Calu3 (cell line): ENCODE measurements at regions of chrX and their contacts with region 1.

Region 1: GRCh38 chrX:125203737-125204578 is 115.7 kb upstream of the TEX13C start:
- DNase-seq: no peak
- H3K4me3 Mint-ChIP-seq: peak overlapping the region; percentile 40
- H3K27ac Mint-ChIP-seq: no peak overlapping the region
- H3K4me1 Mint-ChIP-seq: no peaks in the 10 kb centered on the region
- H3K27me3 Mint-ChIP-seq: peaks cover 23% of the 10 kb centered on the region
- CTCF ChIP-seq: no peak

Region 2: DNA sequence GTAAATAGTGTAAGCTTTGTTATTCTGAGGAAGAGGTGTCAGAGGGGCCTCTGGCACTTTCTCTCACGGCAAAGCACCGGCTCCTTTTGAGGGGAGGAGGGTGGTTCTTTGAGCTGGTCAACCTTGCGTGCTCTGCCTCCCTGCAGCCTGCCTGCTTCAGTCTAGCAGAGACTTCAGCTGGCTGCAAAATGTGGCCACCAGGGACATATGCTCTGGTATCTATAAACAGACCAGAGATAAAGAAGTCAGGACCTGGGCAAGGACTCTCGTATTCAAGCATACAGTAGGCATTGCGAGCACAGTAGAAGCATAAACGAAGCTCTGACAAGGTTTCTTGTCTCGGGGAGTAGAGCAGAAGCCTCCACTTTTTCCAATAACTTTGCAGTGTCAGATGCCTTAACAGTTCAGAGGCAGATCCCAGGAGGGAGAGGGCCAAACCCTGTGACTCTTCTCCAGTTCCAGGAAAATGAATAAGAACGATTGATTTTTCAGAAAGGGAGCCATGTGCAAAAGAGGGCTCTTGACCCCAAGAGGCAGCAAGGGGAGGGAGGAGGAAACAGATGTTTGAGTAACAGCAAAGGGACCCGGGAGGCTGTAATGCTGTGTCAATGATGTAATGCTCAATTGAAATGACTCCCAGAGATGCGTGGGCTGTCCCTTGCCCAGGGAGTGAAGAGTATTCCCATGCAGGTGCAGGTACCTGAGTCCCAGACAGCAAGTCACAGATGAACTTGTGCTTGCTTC is 929.3 kb before region 1 on chrX:
- CTCF ChIA-PET with region 1: interaction called, 12 read pairs
- intact Hi-C with region 1: no loop called
- DNase-seq: no peak
- H3K4me3 Mint-ChIP-seq: no peak overlapping the region
- H3K27ac Mint-ChIP-seq: no peak overlapping the region
- H3K4me1 Mint-ChIP-seq: no peaks in the 10 kb centered on the region
- H3K27me3 Mint-ChIP-seq: no peaks in the 10 kb centered on the region
- CTCF ChIP-seq: no peak

Region 3: GRCh38 chrX:124791492-124792095 is 412.4 kb before region 1 on chrX:
- CTCF ChIA-PET with region 1: no interaction called
- intact Hi-C with region 1: no loop called
- DNase-seq: no peak
- H3K4me3 Mint-ChIP-seq: no peak overlapping the region
- H3K27ac Mint-ChIP-seq: no peak overlapping the region
- H3K4me1 Mint-ChIP-seq: no peaks in the 10 kb centered on the region
- H3K27me3 Mint-ChIP-seq: peaks cover 8% of the 10 kb centered on the region
- CTCF ChIP-seq: no peak